Activated CD8-positive, alpha-beta T cell treated with anti-CD3 and anti-CD28 coated beads for 36 hours (primary cell): ENCODE measurements at regions of chr7 and their contacts with region 1.

Region 1: DNA sequence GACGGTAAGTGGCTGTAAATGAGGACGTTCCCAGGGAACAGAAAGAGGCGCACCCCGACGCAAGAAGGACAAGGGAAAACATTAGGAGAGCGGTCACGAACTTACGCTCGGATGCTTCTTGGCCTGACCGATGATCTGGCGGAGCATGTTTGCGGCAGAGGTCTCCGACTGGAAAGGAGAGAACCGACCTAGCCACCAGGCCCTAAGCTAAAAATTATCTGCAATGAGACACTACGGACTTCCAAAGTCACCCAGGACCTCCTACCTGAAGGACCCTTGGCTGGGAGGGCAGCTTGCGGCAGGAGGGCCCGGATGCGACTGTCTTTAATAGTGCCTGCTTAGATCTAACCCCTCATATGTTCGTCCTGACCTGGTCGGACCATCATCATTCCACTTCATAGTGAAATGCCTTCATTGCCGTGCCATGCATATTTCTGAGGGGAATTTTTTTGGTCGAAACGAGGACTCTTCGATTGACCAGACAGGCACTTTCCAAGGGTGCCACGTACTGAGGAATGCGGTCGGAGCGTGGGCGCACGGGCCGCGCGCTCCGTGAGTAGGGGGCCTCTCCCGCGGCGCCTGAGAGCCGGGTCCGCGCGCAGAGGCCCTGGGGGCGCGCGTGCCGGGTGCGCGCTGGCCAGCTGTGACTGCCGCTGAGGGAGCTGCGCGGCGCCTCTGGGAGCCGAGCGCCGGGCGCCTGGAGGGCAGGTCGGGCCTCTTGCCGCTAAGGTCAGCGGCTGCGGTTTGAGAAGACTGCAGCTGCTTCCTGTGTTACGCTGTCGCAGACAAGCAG is 33.6 kb upstream of the PHF14 start:
- DNase-seq: peak; percentile 90
- ATAC-seq: peak; percentile 92
- H3K4me3 Mint-ChIP-seq: no peak overlapping the region
- H3K27ac Mint-ChIP-seq: no peak overlapping the region
- H3K4me1 Mint-ChIP-seq: peaks cover 32% of the 10 kb centered on the region
- H3K27me3 Mint-ChIP-seq: no peaks in the 10 kb centered on the region
- CTCF ChIP-seq: no peak

Region 2: DNA sequence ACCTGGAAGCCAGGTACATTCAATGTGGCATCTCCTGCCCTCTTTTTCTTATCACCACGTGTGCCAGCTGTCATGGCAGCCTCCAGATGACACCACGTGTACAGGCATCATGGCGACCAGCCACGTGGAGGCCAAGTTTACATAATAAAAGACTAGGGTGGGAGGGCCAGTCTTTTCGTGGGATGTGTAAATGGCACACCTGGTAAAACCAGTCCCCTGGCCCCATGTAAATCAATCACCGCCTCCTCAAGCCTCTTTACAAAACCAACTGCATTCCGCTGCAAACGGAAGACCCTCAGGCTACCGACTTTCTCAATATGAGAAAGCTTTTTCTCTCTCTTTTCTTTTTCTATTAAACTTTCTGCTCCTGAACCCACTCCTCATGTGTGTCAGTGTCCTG is 31.5 kb before region 1 on chr7:
- CTCF ChIA-PET with region 1: no interaction called
- POLR2A ChIA-PET with region 1: no interaction called
- intact Hi-C with region 1: no loop called
- DNase-seq: no peak
- ATAC-seq: no peak
- H3K4me3 Mint-ChIP-seq: no peak overlapping the region
- H3K27ac Mint-ChIP-seq: no peak overlapping the region
- H3K4me1 Mint-ChIP-seq: no peaks in the 10 kb centered on the region
- H3K27me3 Mint-ChIP-seq: peaks cover 3% of the 10 kb centered on the region
- CTCF ChIP-seq: no peak

Region 3: DNA sequence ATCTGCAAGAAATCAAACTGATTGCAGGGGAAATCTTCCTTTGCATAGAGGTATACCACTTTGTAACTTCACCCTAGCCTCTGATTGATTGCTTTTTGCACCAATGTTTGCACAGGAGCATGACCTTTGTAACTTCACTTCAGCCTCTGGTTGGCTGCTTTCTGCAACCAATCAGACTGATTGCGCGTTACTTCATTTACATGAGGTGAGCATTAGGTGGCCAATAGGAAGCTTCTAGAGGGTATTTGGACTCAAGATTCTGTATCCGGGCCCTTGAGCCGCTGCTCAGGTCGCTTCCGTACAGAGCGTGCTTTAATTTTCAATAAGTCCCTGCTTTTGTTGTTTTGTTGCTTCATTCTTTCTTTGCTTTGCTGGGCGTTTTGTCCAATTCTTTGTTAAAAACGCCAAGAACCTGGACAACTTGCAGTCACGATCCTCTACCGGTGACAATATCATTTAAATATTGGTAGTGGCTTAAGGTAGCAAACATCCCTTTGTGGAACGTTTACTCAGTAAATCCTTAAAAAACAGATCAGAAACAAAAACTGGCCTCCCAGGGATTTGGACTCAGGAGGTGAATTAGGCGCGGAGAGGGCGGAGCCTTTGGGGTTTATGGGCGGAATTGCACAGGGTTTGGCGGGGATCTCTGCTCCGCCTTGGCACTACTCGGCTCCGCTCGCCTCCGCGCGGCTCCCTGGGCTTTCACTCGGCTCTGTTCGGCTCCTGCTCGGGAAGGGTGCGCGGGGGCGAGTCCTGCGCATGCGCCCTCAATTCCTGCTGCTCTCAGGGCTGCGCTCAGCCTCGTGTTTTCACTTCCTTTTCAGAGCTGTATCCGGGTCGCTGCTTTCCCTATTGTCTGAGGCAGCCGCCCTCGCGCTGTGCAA is 33.2 kb after region 1 on chr7 and contains the start of gene PHF14:
- CTCF ChIA-PET with region 1: interaction called, 5 read pairs
- POLR2A ChIA-PET with region 1: interaction called, 17 read pairs
- intact Hi-C with region 1: loop called (anchors 1 kb)
- DNase-seq: peak; percentile 98
- ATAC-seq: peak; percentile 98
- H3K4me3 Mint-ChIP-seq: peak within 1 kb of the TSS; percentile 94
- H3K27ac Mint-ChIP-seq: peak within 1 kb of the TSS; percentile 88
- H3K4me1 Mint-ChIP-seq: peaks cover 33% of the 10 kb centered on the region
- H3K27me3 Mint-ChIP-seq: peaks cover 4% of the 10 kb centered on the region
- CTCF ChIP-seq: no peak
- total RNA-seq, gene PHF14: 36.7 to 38.7 TPM